ENCODE measurements at regions of chr3 and their contacts with region 1.

Region 1: DNA sequence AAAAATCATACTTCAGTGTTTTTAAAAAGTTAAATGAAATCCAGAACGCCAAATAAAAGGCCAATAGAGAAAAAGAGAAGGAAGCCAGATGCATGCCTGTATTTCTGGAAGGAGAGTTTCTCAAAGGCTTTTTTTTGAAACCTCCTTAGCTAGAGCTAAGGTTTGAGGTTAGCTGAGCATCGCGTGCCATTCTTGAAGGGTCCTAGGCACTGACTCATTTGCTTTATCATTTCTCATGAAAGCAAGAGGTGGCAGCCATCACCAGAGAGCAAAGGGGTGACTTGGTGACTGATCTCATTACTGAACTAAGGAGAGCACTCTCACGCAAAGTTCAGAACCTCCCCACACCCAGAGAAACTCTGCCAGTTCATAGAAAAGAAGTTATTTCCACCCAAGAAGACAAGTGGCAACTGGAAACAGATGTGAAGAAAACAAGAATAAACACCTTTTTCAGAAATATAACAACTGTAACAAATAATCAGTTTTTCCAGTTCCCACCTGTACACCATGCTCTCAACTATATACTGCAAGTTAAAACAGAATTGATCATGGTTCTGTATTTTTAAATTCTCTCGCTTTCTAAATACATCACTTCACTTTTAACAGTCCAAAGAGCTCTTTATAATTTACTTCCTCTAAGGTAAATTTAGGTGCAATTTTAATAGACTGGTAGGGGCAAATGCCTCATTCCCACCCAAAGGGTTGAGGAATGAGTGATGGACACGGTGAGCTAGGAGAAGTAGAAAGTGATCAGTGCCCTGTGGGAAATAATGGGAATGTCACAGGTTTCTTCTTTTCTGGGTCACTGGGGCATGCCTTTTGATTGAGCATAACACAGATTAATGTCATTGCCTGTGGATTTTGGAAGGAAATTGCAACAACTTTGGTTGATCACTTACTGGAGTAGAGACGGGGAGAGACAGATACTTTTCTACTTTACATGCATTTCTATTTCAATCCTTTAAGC is 24.7 kb downstream of the GPR15 start:
- DNase-seq: no peak
- ATAC-seq: peak; percentile 76
- H3K4me3 Mint-ChIP-seq: peak overlapping the region; percentile 42
- H3K27ac Mint-ChIP-seq: peak overlapping the region; percentile 80
- H3K4me1 Mint-ChIP-seq: peaks cover 56% of the 10 kb centered on the region
- H3K27me3 Mint-ChIP-seq: peaks cover 2% of the 10 kb centered on the region
- CTCF ChIP-seq: no peak

Region 2: GRCh38 chr3:98531622-98532274 is 24.7 kb before region 1 on chr3 and contains the start of gene GPR15:
- CTCF ChIA-PET with region 1: no interaction called
- POLR2A ChIA-PET with region 1: interaction called, 57 read pairs
- intact Hi-C with region 1: loop called (anchors 1 kb)
- DNase-seq: no peak
- ATAC-seq: peak; percentile 23
- H3K4me3 Mint-ChIP-seq: peak within 1 kb of the TSS; percentile 65
- H3K27ac Mint-ChIP-seq: peak within 1 kb of the TSS; percentile 27
- H3K4me1 Mint-ChIP-seq: peaks cover 26% of the 10 kb centered on the region
- H3K27me3 Mint-ChIP-seq: no peaks in the 10 kb centered on the region
- CTCF ChIP-seq: no peak
- total RNA-seq, gene GPR15: 3.7 and 4.5 TPM in 2 replicates

Region 3: GRCh38 chr3:98540346-98540745 is 16.1 kb before region 1 on chr3:
- CTCF ChIA-PET with region 1: no interaction called
- POLR2A ChIA-PET with region 1: interaction called, 57 read pairs
- intact Hi-C with region 1: loop called (anchors 1 kb)
- DNase-seq: no peak
- ATAC-seq: peak; percentile 67
- H3K4me3 Mint-ChIP-seq: no peak overlapping the region
- H3K27ac Mint-ChIP-seq: peak overlapping the region; percentile 25
- H3K4me1 Mint-ChIP-seq: peaks cover 23% of the 10 kb centered on the region
- H3K27me3 Mint-ChIP-seq: no peaks in the 10 kb centered on the region
- CTCF ChIP-seq: no peak